ENCODE measurements at regions of chr9 and their contacts with region 1.

Region 1: DNA sequence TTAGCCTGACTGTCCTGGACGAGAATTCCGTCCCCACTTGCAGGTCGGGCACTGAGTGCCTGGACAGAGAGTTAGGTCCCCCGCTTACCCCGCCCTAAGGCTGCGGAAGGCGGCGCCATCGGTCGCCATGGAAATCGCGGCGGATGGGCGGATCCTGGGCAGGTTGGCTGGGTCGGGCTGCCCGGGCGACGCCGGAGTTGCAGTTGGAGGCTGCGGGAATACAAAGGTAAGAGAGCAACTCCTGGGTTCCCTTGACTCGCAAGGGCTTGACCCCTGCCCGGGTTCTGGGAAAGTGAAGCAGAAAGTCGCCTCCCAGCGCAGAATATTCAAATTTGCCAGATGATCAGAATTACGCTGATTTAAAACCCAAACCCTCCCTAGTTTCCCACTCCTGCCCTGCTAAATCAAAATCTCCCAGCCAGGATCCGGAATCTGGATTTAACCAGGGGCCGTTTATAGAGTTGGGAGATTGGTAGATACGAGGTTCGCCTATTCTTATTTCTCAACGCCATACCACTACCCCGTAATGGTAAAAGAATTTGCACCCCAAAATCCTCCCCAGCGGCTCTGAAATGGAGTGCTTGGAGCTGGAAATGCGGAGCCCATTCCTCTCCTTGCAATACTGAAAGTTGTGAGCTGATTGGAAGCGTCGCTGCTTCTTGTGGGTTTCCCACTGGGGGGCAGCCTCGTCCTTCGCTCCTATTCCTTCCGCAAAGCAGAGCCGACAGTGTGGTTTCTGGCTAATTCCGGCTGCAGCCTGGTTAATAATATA is 156.4 kb upstream of the RASEF start:
- DNase-seq: peak; percentile 12
- H3K4me3 ChIP-seq: peak overlapping the region; percentile 62
- CTCF ChIP-seq: peak; percentile 77

Region 2: GRCh38 chr9:83231033-83231432 is 11.7 kb after region 1 on chr9:
- CTCF ChIA-PET with region 1: interaction called, 24 read pairs
- POLR2A ChIA-PET with region 1: no interaction called
- DNase-seq: no peak
- H3K4me3 ChIP-seq: no peak overlapping the region
- CTCF ChIP-seq: peak; percentile 55

Region 3: DNA sequence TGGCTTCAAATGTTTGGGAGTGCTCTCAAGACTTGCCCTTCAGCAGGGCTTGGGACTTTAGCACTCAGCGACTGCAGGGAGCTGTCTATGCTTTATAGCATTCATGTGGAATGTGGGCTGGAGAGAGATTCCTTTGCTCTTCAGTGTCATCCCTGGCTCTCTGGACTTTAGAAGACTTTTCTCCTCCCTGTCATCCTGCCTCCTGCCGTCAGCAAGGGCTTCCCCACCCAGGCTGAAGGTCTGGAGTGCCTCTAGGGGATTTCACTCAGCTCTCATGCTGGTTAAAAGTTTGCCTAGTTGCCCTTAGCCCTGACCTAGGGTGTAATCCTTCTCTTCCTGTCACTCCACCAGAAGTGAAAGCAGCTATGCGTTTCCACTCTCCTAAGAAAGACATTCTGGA is 108.0 kb after region 1 on chr9:
- CTCF ChIA-PET with region 1: interaction called, 11 read pairs
- POLR2A ChIA-PET with region 1: no interaction called
- DNase-seq: no peak
- H3K4me3 ChIP-seq: no peak overlapping the region
- CTCF ChIP-seq: no peak

Region 4: GRCh38 chr9:83538172-83538889 is 319.0 kb after region 1 on chr9 and contains the start of gene FRMD3:
- CTCF ChIA-PET with region 1: interaction called, 32 read pairs
- POLR2A ChIA-PET with region 1: no interaction called
- DNase-seq: no peak
- H3K4me3 ChIP-seq: peak within 1 kb of the TSS; percentile 66
- CTCF ChIP-seq: peak; percentile 86